CD4-positive, alpha-beta memory T cell (primary cell): ENCODE measurements at regions of chr11 and their contacts with region 1.

Region 1: DNA sequence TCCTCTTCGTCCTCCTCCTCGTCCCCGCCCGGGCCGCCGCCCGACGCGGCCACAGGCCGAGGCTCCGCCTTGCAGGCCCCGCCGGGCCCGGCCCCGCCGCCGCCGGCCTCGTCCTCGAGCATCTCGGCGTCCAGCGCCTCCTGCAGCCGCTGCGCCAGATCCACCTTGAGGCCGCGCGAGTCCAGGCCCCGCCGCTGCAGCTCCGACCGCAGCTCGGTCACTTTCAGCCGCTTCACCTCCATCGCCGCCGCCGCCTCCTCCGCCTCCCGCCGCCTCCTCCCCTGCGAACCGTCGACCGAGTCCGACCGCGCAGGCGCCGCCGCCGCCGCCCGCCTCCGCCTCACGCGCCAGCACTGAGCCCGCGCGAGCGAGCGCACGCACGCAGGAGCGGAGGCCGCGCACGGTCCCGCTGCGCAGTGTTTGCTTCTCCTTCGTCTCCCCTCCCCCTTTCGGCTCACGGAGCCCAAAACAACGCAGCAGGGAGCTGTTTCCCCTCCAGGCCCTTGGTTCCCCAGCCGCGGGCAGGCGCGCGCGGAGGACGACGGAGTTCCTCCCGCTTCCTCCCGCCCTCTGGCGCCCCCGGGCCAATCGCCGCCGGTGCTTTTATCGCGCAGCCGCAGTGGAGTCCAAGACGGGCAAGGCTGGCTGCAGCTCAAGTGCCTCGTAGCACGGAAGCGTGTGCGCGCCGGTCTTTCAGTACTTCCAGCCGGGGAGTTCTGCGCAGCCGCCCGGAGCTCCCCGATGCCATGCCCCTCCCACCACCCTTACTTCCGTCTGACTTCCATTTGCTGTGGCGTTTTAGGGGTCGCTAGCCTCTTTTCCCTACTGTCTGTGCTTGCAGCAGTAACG is at the start of gene HNRNPUL2:
- DNase-seq: peak; percentile 99
- H3K4me3 ChIP-seq: peak within 1 kb of the TSS; percentile 95 to 99
- H3K4me3 Mint-ChIP-seq: peak within 1 kb of the TSS; percentile 84 to 98 (median 96)
- H3K27ac ChIP-seq: peak within 1 kb of the TSS; percentile 93
- H3K27ac Mint-ChIP-seq: peak within 1 kb of the TSS; percentile 98 to 99 (median 99)
- H3K4me1 ChIP-seq: peaks cover 50% of the 10 kb centered on the region
- H3K4me1 Mint-ChIP-seq: peaks cover 28 to 84% (median 50%) of the 10 kb centered on the region in 4 donors
- H3K27me3 ChIP-seq: no peaks in the 10 kb centered on the region
- H3K27me3 Mint-ChIP-seq: no peaks in the 10 kb centered on the region
- total RNA-seq, gene HNRNPUL2: 79.6 to 83.4 TPM

Region 2: DNA sequence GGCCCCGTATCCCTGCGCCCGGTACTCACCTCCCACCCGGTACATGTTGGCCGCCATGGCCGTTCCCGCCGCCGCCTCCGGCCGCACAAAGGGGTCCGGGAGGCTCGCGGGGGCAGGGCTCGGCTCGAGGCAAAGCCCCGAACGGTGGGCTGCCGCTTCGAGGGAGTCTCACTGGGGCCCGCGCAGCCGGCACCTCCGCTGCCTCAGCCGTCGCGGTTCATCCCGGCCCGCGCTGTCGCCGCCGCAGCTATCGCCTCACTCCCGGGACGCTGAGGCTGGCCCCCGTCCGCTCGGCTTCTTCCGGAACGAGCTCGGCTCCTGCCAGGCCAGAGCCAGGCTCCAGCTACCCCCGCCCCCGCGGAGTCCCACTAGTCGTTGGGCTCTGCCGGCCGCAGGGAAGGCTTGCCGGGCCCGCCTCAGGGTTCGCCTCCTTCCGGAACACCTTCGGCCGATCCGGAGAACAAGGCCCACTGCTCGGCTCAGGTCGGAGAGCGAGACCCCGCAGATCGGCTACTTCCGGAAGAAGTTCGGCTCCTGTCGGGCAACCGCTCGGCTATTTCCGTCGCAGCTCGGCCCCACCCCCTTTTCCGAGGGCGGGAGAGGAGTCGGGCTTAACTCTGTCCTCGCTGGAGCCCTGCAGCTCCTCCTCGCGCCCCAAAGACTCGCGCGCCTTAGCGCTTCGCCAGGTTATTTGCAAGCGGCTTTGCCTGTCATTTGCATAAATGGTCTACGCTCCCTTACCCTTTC is 125.6 kb before region 1 on chr11 and contains the start of gene MTA2:
- CTCF ChIA-PET with region 1: no interaction called
- POLR2A ChIA-PET with region 1: interaction called, 25 read pairs
- intact Hi-C with region 1: no loop called
- DNase-seq: peak; percentile 99 to 100 (median 100)
- H3K4me3 ChIP-seq: peak within 1 kb of the TSS; percentile 71 to 82
- H3K4me3 Mint-ChIP-seq: peak within 1 kb of the TSS; percentile 91 to 99 (median 96)
- H3K27ac ChIP-seq: peak within 1 kb of the TSS; percentile 91
- H3K27ac Mint-ChIP-seq: peak within 1 kb of the TSS; percentile 90 to 99 (median 98)
- H3K4me1 ChIP-seq: peaks cover 35% of the 10 kb centered on the region
- H3K4me1 Mint-ChIP-seq: peaks cover 33 to 60% (median 46%) of the 10 kb centered on the region in 4 donors
- H3K27me3 ChIP-seq: no peaks in the 10 kb centered on the region
- H3K27me3 Mint-ChIP-seq: no peaks in the 10 kb centered on the region
- total RNA-seq, gene MTA2: 207 to 210 TPM

Region 3: DNA sequence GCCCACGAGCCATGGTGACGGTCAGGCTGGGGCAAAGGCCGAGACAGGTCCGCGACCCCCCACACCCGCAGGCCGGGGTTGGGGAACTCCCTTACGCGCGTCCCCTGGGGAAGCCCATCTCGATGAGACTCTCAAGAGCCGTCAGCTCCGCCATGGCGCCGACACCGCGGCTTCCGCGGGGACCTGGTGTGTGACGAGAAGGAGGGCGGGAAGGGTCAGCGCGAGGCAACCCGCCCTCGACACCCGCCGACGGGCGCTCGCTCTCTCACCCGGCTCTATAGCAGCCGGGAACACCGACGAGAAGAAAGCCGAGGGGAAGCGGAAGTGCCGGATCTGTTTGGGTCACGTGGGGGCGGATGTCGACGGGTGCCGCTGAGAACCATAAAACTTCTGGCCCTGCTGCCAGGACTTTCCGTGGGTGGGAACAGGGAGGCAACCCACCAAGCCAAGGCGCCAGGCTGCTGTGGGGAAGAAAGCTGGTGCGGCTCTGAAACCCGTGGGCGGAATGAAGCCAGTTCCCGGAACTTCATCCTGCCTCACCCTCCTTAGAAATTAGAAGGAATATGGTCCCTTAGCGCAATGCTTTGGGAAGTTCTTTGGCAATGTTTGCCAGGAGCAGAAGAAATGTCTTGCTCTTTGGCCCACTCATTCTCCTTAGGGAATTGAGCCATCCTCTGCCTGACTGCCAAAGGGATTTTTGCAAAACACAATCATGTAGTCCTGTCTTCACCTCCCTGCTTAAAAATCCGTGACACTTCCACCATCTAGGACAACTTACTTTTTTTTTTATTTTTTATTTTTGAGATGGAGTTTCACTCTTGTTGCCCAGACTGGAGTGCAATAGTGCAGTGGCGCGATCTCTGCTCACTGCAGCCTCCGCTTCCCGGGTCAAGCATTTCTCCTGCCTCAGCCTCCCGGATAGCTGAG is 48.1 kb before region 1 on chr11 and contains the start of gene UBXN1:
- CTCF ChIA-PET with region 1: no interaction called
- POLR2A ChIA-PET with region 1: interaction called, 19 read pairs
- intact Hi-C with region 1: no loop called
- DNase-seq: peak; percentile 80 to 90 (median 82)
- H3K4me3 ChIP-seq: peak within 1 kb of the TSS; percentile 58 to 95
- H3K4me3 Mint-ChIP-seq: peak within 1 kb of the TSS; percentile 87 to 98 (median 92)
- H3K27ac ChIP-seq: peak within 1 kb of the TSS; percentile 98
- H3K27ac Mint-ChIP-seq: peak within 1 kb of the TSS; percentile 86 to 99 (median 95)
- H3K4me1 ChIP-seq: peaks cover 37% of the 10 kb centered on the region
- H3K4me1 Mint-ChIP-seq: peaks cover 16 to 50% (median 31%) of the 10 kb centered on the region in 4 donors
- H3K27me3 ChIP-seq: no peaks in the 10 kb centered on the region
- H3K27me3 Mint-ChIP-seq: no peaks in the 10 kb centered on the region
- total RNA-seq, gene UBXN1: 178 to 185 TPM

Region 4: DNA sequence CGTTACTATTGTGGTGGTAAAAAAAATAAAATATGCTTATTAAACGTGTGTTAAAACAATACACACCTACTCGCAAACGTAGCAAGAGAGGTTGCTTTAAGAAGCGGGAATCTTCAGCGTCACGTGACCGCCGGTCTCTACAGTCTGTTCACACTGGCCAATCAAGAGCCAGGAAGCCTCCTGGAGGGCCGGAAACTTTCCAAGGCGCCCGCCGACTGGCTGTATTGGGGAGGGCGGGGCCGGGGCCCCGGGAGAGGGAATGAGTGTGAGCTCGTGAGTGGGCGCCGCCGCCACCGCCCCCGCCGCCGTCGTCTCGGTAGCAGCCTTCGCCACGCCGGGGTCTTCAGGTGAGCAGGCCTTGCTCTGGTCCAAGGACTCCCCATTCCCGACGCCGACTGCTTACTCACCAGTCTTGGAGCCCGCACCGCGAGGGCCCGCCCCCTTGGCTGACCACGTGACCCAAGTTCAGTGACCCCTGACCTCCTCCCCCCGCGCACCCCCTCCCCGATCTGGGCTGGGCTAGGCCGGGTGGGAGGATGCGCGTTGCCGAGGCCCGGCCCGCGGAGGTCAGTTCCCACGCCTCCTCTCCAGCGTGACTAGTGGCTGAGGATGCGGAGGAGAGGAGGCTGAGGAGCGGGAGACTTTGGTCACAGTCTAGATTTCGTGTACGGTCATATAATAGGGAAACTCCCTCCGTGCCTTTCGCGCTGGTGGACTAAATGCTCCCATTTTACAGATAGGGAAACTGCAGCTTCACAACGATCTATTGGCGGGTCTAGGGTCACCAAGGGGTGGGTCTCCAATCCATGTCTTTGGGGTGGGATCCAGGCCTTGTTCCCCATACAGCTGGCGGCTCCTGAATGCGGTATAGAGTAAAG is 44.2 kb after region 1 on chr11 and contains the start of gene TAF6L:
- CTCF ChIA-PET with region 1: interaction called, 3 read pairs
- POLR2A ChIA-PET with region 1: interaction called, 52 read pairs
- intact Hi-C with region 1: loop called (anchors 1 kb)
- DNase-seq: peak; percentile 86 to 92 (median 88)
- H3K4me3 ChIP-seq: peak within 1 kb of the TSS; percentile 67 to 83
- H3K4me3 Mint-ChIP-seq: peak within 1 kb of the TSS; percentile 87 to 97 (median 92)
- H3K27ac ChIP-seq: peak within 1 kb of the TSS; percentile 82
- H3K27ac Mint-ChIP-seq: peak within 1 kb of the TSS; percentile 92 to 99 (median 97)
- H3K4me1 ChIP-seq: peaks cover 24% of the 10 kb centered on the region
- H3K4me1 Mint-ChIP-seq: peaks cover 14 to 32% (median 22%) of the 10 kb centered on the region in 4 donors
- H3K27me3 ChIP-seq: no peaks in the 10 kb centered on the region
- H3K27me3 Mint-ChIP-seq: no peaks in the 10 kb centered on the region
- total RNA-seq, gene TAF6L: 26.3 to 34.0 TPM

Region 5: DNA sequence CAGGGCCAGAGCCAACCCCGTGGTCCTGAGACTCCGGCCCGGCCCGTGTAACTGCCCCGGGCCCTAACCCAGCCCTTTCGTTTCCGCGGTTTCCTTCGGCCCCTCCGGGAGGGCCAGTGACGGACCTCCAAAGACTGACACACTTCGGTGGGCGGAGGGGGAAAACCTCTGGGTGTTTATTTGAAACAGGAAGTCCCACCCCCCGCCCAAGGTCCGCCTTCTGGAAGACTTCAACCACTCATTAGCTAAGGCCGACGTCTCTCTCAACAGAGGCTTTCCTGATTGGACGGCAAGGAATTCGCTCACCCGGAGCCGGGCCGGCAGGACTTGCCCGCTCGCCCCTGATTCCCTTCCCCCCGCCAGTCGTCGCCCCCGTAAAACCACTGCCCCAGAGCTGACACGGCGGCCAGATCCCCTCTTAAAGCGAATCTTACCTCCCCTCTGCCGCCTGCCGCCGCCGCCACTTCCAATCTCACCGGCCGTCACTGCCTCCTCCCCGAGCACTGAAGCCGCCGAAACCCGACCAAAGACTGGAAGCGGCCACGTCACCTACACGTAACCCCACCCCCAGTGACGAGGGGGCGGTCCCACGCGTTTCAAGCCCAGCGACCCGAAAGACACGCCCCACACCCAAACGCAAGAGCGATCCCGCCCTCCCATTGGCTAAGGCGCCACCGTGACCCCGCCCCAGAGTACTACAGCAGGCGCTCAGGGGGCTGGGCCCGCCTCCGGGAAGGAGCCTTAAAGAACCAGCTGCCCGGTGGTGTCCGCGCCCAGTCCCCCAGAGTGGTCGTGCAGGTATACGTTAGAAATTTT is 104.6 kb after region 1 on chr11 and contains the start of gene STX5:
- CTCF ChIA-PET with region 1: no interaction called
- POLR2A ChIA-PET with region 1: interaction called, 19 read pairs
- intact Hi-C with region 1: loop called (anchors 2 kb)
- DNase-seq: peak; percentile 99 to 100 (median 100)
- H3K4me3 ChIP-seq: peak within 1 kb of the TSS; percentile 82 to 85
- H3K4me3 Mint-ChIP-seq: peak within 1 kb of the TSS; percentile 94 to 100 (median 98)
- H3K27ac ChIP-seq: peak within 1 kb of the TSS; percentile 97
- H3K27ac Mint-ChIP-seq: peak within 1 kb of the TSS; percentile 94 to 100 (median 99)
- H3K4me1 ChIP-seq: peaks cover 30% of the 10 kb centered on the region
- H3K4me1 Mint-ChIP-seq: peaks cover 21 to 59% (median 41%) of the 10 kb centered on the region in 4 donors
- H3K27me3 ChIP-seq: no peaks in the 10 kb centered on the region
- H3K27me3 Mint-ChIP-seq: no peaks in the 10 kb centered on the region
- total RNA-seq, gene STX5: 66.0 to 67.9 TPM

Region 6: DNA sequence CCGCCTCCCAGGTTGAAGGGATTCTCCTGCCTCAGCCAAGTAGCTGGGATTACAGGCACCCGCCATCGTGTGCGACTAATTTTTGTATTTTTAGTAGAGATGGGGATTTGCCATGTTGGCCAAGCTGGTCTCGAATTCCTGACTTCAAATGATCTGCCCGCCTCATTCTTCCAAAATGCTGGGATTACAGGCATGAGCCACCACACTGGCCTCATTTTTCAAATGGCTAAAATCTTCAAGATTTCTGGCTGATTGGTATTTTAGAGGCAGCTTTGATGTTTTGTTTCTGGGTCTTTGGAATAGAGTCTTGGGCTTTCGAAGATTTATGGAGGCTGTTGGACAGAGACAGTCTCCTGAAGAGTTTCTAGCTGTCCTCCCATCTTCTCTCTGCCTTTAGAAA is 147.7 kb after region 1 on chr11:
- CTCF ChIA-PET with region 1: no interaction called
- POLR2A ChIA-PET with region 1: no interaction called
- intact Hi-C with region 1: no loop called
- DNase-seq: no peak
- H3K4me3 ChIP-seq: no peak overlapping the region
- H3K4me3 Mint-ChIP-seq: no peak overlapping the region
- H3K27ac ChIP-seq: no peak overlapping the region
- H3K27ac Mint-ChIP-seq: no peak overlapping the region
- H3K4me1 ChIP-seq: peaks cover 5% of the 10 kb centered on the region
- H3K4me1 Mint-ChIP-seq: peaks cover 0 to 5% (median 3%) of the 10 kb centered on the region in 4 donors
- H3K27me3 ChIP-seq: no peaks in the 10 kb centered on the region
- H3K27me3 Mint-ChIP-seq: no peaks in the 10 kb centered on the region

Region 7: GRCh38 chr11:62896049-62896448 is 168.9 kb after region 1 on chr11:
- CTCF ChIA-PET with region 1: no interaction called
- POLR2A ChIA-PET with region 1: no interaction called
- intact Hi-C with region 1: no loop called
- DNase-seq: no peak
- H3K4me3 ChIP-seq: no peak overlapping the region
- H3K4me3 Mint-ChIP-seq: no peak overlapping the region
- H3K27ac ChIP-seq: no peak overlapping the region
- H3K27ac Mint-ChIP-seq: no peak overlapping the region
- H3K4me1 ChIP-seq: no peaks in the 10 kb centered on the region
- H3K4me1 Mint-ChIP-seq: peaks cover 0 to 5% (median 3%) of the 10 kb centered on the region in 4 donors
- H3K27me3 ChIP-seq: no peaks in the 10 kb centered on the region
- H3K27me3 Mint-ChIP-seq: peaks cover 8 to 9% of the 10 kb centered on the region in 2 donors